Left lung (tissue), 14 donors: ENCODE measurements at regions of chr10 and their contacts with region 1.

Region 1: DNA sequence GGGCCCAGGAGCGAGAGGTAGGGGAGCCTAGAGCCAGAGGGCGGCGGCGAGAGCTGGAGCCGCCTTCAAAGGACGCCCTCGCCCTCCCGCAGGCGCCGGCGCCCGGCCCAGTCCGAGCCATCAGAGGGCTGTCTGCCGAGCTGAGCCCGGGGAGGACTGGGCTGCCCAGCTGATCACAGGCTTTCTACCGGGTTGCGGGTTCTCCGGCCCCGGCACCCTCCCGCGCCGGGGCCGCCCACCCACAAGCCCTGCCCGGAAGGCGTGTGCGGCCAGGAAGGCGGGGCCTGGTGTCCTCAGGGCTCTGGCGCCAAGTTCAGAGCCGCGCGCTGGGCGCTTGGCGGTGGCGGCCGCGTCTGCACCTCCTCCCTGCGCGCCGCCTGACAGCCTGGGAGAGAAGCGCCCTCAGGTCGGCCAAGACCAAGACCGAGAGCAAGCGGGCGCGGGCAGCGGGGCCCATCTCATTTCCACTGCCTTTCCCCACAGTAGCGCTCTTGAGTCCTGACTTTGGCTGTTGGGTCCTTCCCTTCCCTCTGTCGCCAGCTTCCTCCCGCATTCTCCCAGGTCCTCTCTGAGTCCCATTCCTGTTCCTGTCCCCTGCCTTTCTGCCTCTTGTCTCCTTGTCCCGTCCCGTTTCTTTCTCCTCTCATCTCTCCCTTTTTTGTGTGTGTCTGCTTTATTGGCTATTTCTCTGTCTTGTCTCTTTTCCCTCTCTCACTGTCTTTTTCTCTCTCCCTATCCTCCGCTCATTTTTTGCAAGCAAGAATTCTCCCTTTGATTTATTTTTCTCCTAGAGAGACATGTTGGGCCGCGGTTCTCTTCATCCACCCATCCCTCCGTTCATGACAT is 60.6 kb upstream of the MSMB start:
- DNase-seq: peak; percentile 50 to 92 (median 66)
- ATAC-seq: peak; percentile 99
- H3K4me3 ChIP-seq: peak overlapping the region; percentile 26 to 49
- H3K27ac ChIP-seq: peak overlapping the region in 1 of 2 donors; percentile 28
- H3K4me1 ChIP-seq: peaks cover 5 to 10% of the 10 kb centered on the region in 2 donors
- H3K27me3 ChIP-seq: peaks cover 4 to 11% of the 10 kb centered on the region in 2 donors
- CTCF ChIP-seq: peak in 1 of 2 donors; percentile 34

Region 2: DNA sequence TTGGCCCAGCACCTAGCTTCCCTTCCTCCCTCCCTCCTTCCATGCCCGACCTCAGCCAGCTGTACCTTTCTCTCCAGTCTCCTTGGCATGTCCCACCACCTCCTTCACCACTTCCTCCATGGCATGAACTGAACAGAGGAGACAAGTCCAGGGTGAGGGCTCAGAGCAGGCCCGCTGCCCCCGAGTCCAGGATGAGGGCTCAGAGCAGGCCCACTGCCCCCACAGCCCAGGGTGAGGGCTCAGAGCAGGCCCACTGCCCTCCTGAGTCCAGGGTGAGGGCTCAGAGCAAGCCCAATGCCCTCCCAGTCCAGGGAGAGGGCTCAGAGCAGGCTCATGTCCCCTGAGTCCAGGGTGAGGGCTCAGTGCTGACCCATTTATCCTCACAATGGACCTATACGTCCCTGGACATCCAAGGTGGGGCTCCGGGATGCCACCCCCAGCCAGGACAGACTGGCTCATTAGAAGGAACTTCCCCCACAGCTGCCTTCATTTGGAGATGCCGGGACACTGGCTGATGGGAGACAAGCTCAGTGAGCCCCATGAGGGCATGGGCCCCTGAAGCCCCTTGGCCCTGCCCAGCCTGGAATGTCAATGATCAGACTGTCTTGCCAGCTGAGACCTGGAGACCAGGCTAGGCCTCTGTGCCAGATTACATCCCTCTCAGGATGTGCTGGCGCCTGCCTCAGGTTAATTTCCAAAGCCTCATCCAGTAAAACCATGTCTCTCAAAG is 289.3 kb before region 1 on chr10:
- intact Hi-C with region 1: no loop called
- DNase-seq: no peak
- ATAC-seq: no peak
- H3K4me3 ChIP-seq: no peak overlapping the region
- H3K27ac ChIP-seq: no peak overlapping the region
- H3K4me1 ChIP-seq: no peaks in the 10 kb centered on the region
- H3K27me3 ChIP-seq: no peaks in the 10 kb centered on the region
- CTCF ChIP-seq: no peak

Region 3: GRCh38 chr10:46284293-46285229 is 177.9 kb after region 1 on chr10:
- intact Hi-C with region 1: loop called in 1 of 2 experiments (anchors 10 kb)
- DNase-seq: peak; percentile 85 to 99 (median 88)
- ATAC-seq: peak; percentile 92
- H3K4me3 ChIP-seq: peak overlapping the region; percentile 56 to 74
- H3K27ac ChIP-seq: peak overlapping the region; percentile 60 to 91
- H3K4me1 ChIP-seq: peaks cover 0 to 34% of the 10 kb centered on the region in 2 donors
- H3K27me3 ChIP-seq: peaks cover 0 to 20% of the 10 kb centered on the region in 2 donors
- CTCF ChIP-seq: no peak